ENCODE measurements at regions of chr16 and their contacts with region 1.

Region 1: DNA sequence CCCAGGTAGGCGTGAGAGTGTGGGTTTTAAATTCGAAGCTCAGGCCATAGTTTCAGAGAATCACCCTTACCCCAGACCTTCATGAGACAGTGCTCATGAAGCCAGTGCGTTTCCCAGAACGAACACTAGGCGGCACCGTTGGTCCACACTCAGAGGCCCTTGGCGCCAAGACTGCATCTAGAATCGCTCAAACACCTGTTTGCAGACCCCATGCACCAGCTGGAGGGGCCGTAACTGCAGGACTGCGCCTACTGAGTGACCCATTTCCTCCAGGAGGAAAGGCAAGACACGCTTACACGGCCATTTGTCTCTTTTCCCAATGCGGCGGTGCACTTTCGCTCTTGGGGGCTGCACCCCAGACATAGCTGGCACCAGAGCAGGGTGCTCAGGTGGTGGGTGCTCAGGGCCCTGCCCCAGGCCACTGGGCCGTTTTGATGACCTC is 34.0 kb downstream of the ADGRG5 start:
- DNase-seq: peak; percentile 89
- ATAC-seq: peak; percentile 55
- H3K4me3 Mint-ChIP-seq: no peak overlapping the region
- H3K27ac Mint-ChIP-seq: peak overlapping the region; percentile 96
- H3K4me1 Mint-ChIP-seq: peaks cover 48% of the 10 kb centered on the region
- H3K27me3 Mint-ChIP-seq: no peaks in the 10 kb centered on the region

Region 2: GRCh38 chr16:57541754-57542435 is 34.6 kb before region 1 on chr16:
- POLR2A ChIA-PET with region 1: interaction called, 13 read pairs
- DNase-seq: no peak
- ATAC-seq: no peak
- H3K4me3 Mint-ChIP-seq: peak overlapping the region; percentile 88
- H3K27ac Mint-ChIP-seq: peak overlapping the region; percentile 93
- H3K4me1 Mint-ChIP-seq: peaks cover 78% of the 10 kb centered on the region
- H3K27me3 Mint-ChIP-seq: no peaks in the 10 kb centered on the region

Region 3: DNA sequence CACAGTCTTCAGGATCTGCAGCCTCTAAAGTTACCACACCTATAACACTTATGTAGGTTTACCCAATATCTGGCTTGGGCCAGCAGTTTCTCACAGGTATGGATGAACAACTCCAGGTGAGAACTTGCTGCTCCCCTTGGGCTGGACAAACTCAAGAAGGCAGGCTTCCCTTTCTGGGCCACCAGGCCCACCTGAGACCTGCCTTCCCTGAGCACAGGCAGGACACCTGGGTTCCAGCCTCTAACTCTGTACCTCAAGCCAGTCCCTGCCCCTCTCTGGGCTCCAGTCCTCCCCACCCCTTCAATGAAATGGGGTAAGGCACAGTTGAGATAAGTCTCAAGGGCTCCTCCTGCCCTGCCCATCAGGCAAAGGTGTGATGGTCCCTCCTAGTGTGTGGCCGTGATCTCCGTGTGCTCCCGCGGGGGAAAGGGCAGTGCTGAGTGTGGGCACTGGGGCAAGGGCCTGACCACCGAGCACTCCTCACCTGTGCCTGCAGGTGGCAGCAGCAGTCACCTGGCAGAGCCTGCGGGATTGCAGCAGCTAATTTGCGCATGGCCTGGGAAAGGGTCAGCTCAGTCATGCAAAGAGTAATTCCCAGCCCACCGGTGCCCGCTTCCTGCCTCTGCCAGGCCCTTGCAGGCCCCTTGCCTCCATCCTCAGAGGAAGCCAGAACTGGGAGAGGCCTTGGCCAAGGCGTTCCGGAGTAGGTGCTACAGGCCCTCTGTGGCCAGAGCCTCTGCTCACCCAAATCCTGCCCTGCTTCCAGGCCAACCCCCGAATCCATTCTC is 23.8 kb after region 1 on chr16:
- POLR2A ChIA-PET with region 1: interaction called, 21 read pairs
- DNase-seq: peak; percentile 61
- ATAC-seq: no peak
- H3K4me3 Mint-ChIP-seq: no peak overlapping the region
- H3K27ac Mint-ChIP-seq: peak overlapping the region; percentile 79
- H3K4me1 Mint-ChIP-seq: peaks cover 52% of the 10 kb centered on the region
- H3K27me3 Mint-ChIP-seq: no peaks in the 10 kb centered on the region

Region 4: DNA sequence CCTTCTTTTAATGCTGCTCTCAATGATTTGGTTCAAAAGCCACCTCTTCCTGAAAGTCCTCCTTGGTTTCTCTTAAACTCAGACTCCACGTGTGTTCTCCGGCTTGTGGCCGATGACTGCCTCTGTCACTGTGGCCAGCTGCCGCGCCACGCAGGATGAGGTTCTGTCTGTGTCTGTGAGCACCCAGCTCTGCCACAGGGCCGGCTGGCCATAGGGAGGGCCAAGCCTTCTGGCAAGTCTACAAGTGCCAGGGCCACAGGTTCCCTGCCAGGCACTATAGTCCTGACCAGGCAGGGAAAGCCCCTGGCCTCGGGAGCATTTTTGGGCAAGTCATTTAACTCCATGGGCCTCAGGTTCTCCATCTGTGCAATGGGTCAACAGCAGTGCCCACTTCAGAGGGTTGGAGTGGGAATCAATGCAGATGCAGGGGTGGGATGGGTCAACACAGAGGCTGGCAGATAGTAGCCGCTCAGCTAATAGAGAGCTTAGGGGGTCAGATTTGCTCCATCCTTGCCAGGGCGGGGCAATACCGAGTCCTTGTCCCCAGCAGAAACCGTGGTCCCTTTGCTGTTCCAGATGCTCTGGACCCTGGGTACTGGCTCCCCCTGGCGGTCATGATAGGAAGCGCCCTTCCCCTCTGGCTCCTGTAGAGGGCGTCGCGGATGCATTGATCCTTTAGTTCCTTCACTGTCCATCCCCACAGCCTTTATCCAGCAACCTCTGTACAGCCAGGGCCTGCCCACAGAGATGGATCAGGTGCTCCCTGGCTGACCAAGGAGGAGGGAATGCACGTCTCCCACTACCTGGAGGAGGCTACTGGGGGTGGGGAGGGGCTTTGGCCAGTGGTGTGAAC is 72.4 kb after region 1 on chr16:
- POLR2A ChIA-PET with region 1: interaction called, 34 read pairs
- DNase-seq: peak; percentile 93
- ATAC-seq: peak; percentile 57
- H3K4me3 Mint-ChIP-seq: peak overlapping the region; percentile 49
- H3K27ac Mint-ChIP-seq: peak overlapping the region; percentile 87
- H3K4me1 Mint-ChIP-seq: peaks cover 40% of the 10 kb centered on the region
- H3K27me3 Mint-ChIP-seq: no peaks in the 10 kb centered on the region

Region 5: GRCh38 chr16:58000706-58001676 is 424.5 kb after region 1 on chr16 and contains the start of gene USB1:
- POLR2A ChIA-PET with region 1: interaction called, 11 read pairs
- DNase-seq: peak; percentile 98
- ATAC-seq: peak; percentile 57
- H3K4me3 Mint-ChIP-seq: peak within 1 kb of the TSS; percentile 95
- H3K27ac Mint-ChIP-seq: peak within 1 kb of the TSS; percentile 92
- H3K4me1 Mint-ChIP-seq: peaks cover 42% of the 10 kb centered on the region
- H3K27me3 Mint-ChIP-seq: no peaks in the 10 kb centered on the region
- total RNA-seq, gene USB1: 47.4 to 53.9 TPM